Activated CD4-positive, alpha-beta T cell treated with anti-CD3 and anti-CD28 coated beads, Interleukin-2, amount 10 ng/mL, durations not matched to agents 24 days and 14 days (primary cell): ENCODE measurements at regions of chr3 and their contacts with region 1.

Region 1: DNA sequence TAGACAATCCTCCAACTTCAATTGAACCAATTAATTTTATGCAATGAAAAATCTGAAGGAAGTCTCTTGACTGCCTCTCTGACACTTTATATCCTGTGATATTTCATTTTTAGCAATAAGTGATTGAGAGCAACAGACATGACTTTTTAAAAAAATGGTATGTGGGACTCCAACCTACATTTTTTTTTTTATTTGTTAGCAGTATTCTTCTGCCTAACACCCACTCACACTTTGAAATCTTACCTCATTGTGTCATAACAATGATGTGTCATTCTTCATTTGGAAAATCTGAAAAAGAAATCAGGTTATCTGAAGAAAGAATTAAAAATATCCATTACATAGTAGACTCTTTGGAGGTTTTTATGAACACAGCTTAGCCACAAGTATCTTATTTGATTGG is 541.3 kb upstream of the KCNMB2 start:
- DNase-seq: no peak
- H3K4me3 Mint-ChIP-seq: peak overlapping the region; percentile 21
- H3K27ac Mint-ChIP-seq: peak overlapping the region; percentile 61
- H3K4me1 Mint-ChIP-seq: peaks cover 28% of the 10 kb centered on the region
- H3K27me3 Mint-ChIP-seq: no peaks in the 10 kb centered on the region

Region 2: GRCh38 chr3:177057768-177058167 is 937.2 kb before region 1 on chr3:
- intact Hi-C with region 1: loop called (anchors 5 kb)
- DNase-seq: peak; percentile 76
- H3K4me3 Mint-ChIP-seq: no peak overlapping the region
- H3K27ac Mint-ChIP-seq: no peak overlapping the region
- H3K4me1 Mint-ChIP-seq: peaks cover 19% of the 10 kb centered on the region
- H3K27me3 Mint-ChIP-seq: no peaks in the 10 kb centered on the region

Region 3: GRCh38 chr3:177883957-177884356 is 111.0 kb before region 1 on chr3:
- intact Hi-C with region 1: loop called (anchors 5 kb)
- DNase-seq: no peak
- H3K4me3 Mint-ChIP-seq: no peak overlapping the region
- H3K27ac Mint-ChIP-seq: no peak overlapping the region
- H3K4me1 Mint-ChIP-seq: peaks cover 12% of the 10 kb centered on the region
- H3K27me3 Mint-ChIP-seq: no peaks in the 10 kb centered on the region

Region 4: GRCh38 chr3:177944228-177944661 is 50.7 kb before region 1 on chr3:
- intact Hi-C with region 1: loop called (anchors 5 kb)
- DNase-seq: no peak
- H3K4me3 Mint-ChIP-seq: peak overlapping the region; percentile 7
- H3K27ac Mint-ChIP-seq: peak overlapping the region; percentile 27
- H3K4me1 Mint-ChIP-seq: peaks cover 12% of the 10 kb centered on the region
- H3K27me3 Mint-ChIP-seq: no peaks in the 10 kb centered on the region

Region 5: GRCh38 chr3:178084938-178085816 is 90.2 kb after region 1 on chr3:
- intact Hi-C with region 1: loop called (anchors 10 kb)
- DNase-seq: peak; percentile 81
- H3K4me3 Mint-ChIP-seq: peak overlapping the region; percentile 61
- H3K27ac Mint-ChIP-seq: peak overlapping the region; percentile 10
- H3K4me1 Mint-ChIP-seq: peaks cover 22% of the 10 kb centered on the region
- H3K27me3 Mint-ChIP-seq: no peaks in the 10 kb centered on the region